Activated CD4-positive, alpha-beta T cell treated with anti-CD3 and anti-CD28 coated beads for 36 hours (primary cell): ENCODE measurements at regions of chr11 and their contacts with region 1.

Region 1: GRCh38 chr11:10792398-10792975 is 16.2 kb downstream of the EIF4G2 start:
- DNase-seq: peak; percentile 93
- ATAC-seq: peak; percentile 96
- H3K4me3 Mint-ChIP-seq: no peak overlapping the region
- H3K27ac Mint-ChIP-seq: no peak overlapping the region
- H3K4me1 Mint-ChIP-seq: peaks cover 21% of the 10 kb centered on the region
- H3K27me3 Mint-ChIP-seq: peaks cover 3% of the 10 kb centered on the region

Region 2: GRCh38 chr11:10770626-10771254 is 21.7 kb before region 1 on chr11:
- CTCF ChIA-PET with region 1: interaction called, 12 read pairs
- POLR2A ChIA-PET with region 1: interaction called, 3 read pairs
- intact Hi-C with region 1: no loop called
- DNase-seq: peak; percentile 55
- ATAC-seq: no peak
- H3K4me3 Mint-ChIP-seq: no peak overlapping the region
- H3K27ac Mint-ChIP-seq: no peak overlapping the region
- H3K4me1 Mint-ChIP-seq: no peaks in the 10 kb centered on the region
- H3K27me3 Mint-ChIP-seq: no peaks in the 10 kb centered on the region

Region 3: DNA sequence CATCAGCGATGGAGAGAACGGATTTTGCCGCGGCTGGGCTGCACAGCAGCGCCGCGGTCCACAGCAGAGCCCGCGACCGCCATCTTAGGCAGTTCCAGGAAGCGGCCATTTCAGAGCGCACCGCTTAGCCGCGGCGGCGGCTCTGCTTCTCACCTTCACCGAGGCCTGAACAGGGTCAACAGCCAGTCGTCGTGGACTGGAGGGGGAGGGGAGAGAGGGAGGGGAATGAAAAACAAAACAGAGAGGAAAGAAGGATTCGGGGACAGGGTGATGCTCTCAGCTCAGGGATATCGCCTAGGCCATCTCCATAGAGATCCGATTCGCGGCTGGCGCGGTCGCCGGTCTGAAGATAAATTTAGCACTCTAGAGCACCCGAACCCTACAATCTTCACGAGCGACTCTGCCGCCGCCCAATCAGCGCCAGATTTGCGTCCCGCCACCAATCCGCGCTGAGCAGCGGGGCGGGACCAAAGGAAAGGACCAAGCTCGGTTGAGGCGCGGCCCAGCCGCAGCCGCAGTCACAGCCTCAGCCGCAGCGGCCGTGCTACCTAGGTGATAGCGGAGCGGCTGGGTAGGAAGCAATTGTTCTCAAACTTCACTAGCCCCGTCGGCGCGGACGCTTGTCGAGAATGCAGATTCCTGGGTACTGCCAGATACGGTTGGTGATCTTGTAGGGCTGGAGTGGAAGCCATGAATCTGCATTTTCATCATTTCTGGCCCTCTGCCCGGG is 65.4 kb after region 1 on chr11 and contains the start of gene ZBED5:
- CTCF ChIA-PET with region 1: interaction called, 15 read pairs
- POLR2A ChIA-PET with region 1: no interaction called
- intact Hi-C with region 1: no loop called
- DNase-seq: peak; percentile 98
- ATAC-seq: peak; percentile 93
- H3K4me3 Mint-ChIP-seq: peak within 1 kb of the TSS; percentile 100
- H3K27ac Mint-ChIP-seq: peak within 1 kb of the TSS; percentile 100
- H3K4me1 Mint-ChIP-seq: peaks cover 40% of the 10 kb centered on the region
- H3K27me3 Mint-ChIP-seq: no peaks in the 10 kb centered on the region
- total RNA-seq, gene ZBED5: 34.1 to 44.3 TPM

Region 4: DNA sequence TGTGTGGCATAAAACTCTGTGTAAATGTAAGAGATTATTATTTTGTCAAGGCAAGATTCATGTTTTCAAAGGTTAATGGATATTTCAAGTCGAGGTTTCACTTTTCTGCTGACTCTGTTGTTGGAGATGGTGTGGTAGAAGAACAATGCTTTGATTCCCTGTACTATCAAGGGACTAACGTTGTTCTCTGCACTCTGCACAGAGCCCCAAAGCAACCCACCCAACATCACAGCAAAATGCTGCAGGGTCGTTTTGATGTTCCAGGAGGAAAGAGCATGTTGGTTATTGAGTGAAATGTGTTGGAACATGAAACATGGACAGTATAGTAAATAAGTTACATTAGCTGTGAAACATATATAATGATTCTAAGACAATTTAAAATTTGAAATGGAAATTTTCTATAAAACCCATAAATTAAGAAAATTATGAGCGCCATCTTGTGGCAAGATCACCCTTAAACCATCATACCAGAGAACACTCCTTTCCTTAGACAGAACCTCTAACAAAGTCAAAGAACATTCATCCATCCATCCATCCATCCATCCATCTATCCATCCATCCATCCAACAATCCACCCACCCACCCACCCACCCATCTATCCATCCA is 229.7 kb after region 1 on chr11:
- CTCF ChIA-PET with region 1: interaction called, 29 read pairs
- POLR2A ChIA-PET with region 1: interaction called, 3 read pairs
- intact Hi-C with region 1: loop called (anchors 1 kb)
- DNase-seq: peak; percentile 27
- ATAC-seq: no peak
- H3K4me3 Mint-ChIP-seq: no peak overlapping the region
- H3K27ac Mint-ChIP-seq: no peak overlapping the region
- H3K4me1 Mint-ChIP-seq: no peaks in the 10 kb centered on the region
- H3K27me3 Mint-ChIP-seq: no peaks in the 10 kb centered on the region

Region 5: DNA sequence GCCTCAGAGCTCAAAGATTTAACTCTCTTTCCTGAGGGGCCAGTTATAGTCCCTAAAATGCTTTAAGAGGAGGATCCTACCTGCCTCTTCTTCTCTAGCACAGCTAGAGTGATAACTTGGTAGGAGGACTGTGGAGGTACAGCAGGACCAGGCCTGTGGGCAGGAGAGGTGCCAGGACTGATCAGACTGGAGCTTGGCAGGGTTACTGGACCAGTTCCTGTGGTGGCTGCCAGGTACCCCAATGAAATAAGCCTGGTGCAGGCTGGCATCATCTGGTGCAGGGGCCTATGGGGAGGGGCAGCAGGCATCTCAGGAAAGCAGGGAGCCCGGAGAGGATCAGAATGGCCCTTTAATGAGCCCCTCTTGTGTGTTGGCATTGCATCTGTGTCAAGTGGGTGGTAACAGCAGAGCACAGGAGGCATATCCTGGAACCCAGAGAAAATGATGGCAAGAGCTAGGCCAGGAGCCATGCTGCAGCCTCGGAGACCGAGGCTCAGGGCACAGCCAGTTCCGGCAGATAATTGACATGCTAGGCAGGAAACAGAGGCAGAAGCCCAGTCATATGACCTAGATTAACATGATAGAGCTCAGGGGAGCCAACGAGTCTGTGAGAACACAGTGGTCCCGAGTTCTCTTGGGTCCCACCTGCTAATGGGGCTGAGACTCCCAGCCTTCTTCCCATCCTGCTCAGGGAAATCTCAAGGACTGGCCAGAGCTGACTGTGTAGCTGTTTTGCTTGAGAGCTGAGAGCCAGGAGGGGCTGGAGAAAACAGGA is 252.9 kb after region 1 on chr11:
- CTCF ChIA-PET with region 1: no interaction called
- POLR2A ChIA-PET with region 1: no interaction called
- intact Hi-C with region 1: no loop called
- DNase-seq: no peak
- ATAC-seq: no peak
- H3K4me3 Mint-ChIP-seq: no peak overlapping the region
- H3K27ac Mint-ChIP-seq: no peak overlapping the region
- H3K4me1 Mint-ChIP-seq: no peaks in the 10 kb centered on the region
- H3K27me3 Mint-ChIP-seq: no peaks in the 10 kb centered on the region

Region 6: GRCh38 chr11:11265994-11266606 is 473.6 kb after region 1 on chr11:
- CTCF ChIA-PET with region 1: no interaction called
- POLR2A ChIA-PET with region 1: no interaction called
- intact Hi-C with region 1: loop called in 1 of 2 experiments (anchors 5 kb)
- DNase-seq: peak; percentile 83
- ATAC-seq: peak; percentile 68
- H3K4me3 Mint-ChIP-seq: no peak overlapping the region
- H3K27ac Mint-ChIP-seq: no peak overlapping the region
- H3K4me1 Mint-ChIP-seq: no peaks in the 10 kb centered on the region
- H3K27me3 Mint-ChIP-seq: peaks cover 2% of the 10 kb centered on the region